Heart right ventricle (tissue), 16 donors: ENCODE measurements at regions of chr1 and their contacts with region 1.

Region 1: GRCh38 chr1:109426278-109427170 is at the start of gene PSMA5:
- DNase-seq: peak; percentile 93 to 97
- ATAC-seq: peak; percentile 99 to 100 (median 99)
- H3K4me3 ChIP-seq: peak within 1 kb of the TSS; percentile 76 to 96 (median 90)
- H3K27ac ChIP-seq: peak within 1 kb of the TSS; percentile 47 to 94 (median 88)
- H3K4me1 ChIP-seq: peaks cover 0 to 47% (median 30%) of the 10 kb centered on the region in 9 donors
- H3K27me3 ChIP-seq: no peaks in the 10 kb centered on the region
- CTCF ChIP-seq: no peak
- total RNA-seq, gene PSMA5: 51.2 to 65.6 (median 59.2) TPM

Region 2: GRCh38 chr1:109161858-109162606 is 264.5 kb before region 1 on chr1:
- intact Hi-C with region 1: no loop called
- DNase-seq: peak in 1 of 2 donors; percentile 34
- ATAC-seq: peak in 7 of 8 donors; percentile 53 to 93 (median 78)
- H3K4me3 ChIP-seq: peak overlapping the region in 1 of 10 donors; percentile 9
- H3K27ac ChIP-seq: peak overlapping the region in 7 of 10 donors; percentile 7 to 73 (median 30)
- H3K4me1 ChIP-seq: peaks cover 0 to 35% (median 8%) of the 10 kb centered on the region in 9 donors
- H3K27me3 ChIP-seq: no peaks in the 10 kb centered on the region
- CTCF ChIP-seq: no peak

Region 3: DNA sequence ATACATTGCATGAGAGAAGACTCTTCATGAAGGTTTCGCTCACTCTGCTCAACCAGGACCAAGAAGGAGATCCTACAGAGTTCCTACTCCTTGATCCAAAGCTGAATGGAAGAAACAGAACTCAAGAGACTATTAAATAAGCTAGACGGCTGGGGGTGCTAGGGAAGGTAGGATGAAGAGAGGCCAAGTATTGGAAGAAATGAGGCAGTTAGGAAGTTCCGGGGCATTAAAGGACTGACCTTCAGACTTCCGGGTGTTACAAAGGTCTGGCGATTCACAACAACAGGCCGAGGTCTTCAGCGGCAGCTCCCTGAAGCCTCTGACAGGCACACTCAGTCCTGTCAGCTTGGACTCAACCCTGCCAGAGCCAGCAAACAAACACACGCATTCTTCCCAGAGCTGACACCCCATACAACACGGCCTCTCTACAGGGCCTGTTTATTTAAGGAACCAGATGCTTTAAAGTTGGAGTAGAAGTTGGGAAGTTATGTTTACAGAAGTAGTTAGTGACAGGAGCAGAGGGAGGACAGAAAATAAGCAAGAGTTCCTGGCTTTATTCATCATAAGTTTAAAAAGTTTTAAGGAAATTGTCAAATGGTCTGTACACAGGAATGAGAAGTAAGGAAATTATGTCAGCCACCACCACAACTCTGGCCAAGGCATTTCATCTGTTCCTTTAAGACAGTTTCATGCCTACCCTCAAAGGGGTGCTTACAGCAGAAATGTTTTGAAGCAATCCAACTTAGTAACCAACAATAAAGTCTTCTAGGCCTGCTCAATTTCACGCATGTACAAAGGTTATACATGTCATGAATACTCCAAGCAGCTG is 33.5 kb before region 1 on chr1:
- intact Hi-C with region 1: no loop called
- DNase-seq: peak; percentile 71 to 76
- ATAC-seq: peak; percentile 44 to 86 (median 70)
- H3K4me3 ChIP-seq: peak overlapping the region in 9 of 10 donors; percentile 1 to 42 (median 34)
- H3K27ac ChIP-seq: peak overlapping the region; percentile 72 to 96 (median 90)
- H3K4me1 ChIP-seq: peaks cover 22 to 89% (median 79%) of the 10 kb centered on the region in 9 donors
- H3K27me3 ChIP-seq: peaks cover 0 to 11% (median 0%) of the 10 kb centered on the region in 7 donors
- CTCF ChIP-seq: no peak

Region 4: GRCh38 chr1:109466452-109467300 is 40.2 kb after region 1 on chr1 and contains the start of gene SYPL2:
- intact Hi-C with region 1: loop called in 3 of 10 experiments (anchors 2 to 5 kb)
- DNase-seq: peak; percentile 69 to 72
- ATAC-seq: peak; percentile 84 to 95 (median 89)
- H3K4me3 ChIP-seq: peak within 1 kb of the TSS; percentile 57 to 72 (median 68)
- H3K27ac ChIP-seq: peak within 1 kb of the TSS; percentile 32 to 96 (median 90)
- H3K4me1 ChIP-seq: peaks cover 0 to 16% (median 10%) of the 10 kb centered on the region in 9 donors
- H3K27me3 ChIP-seq: peaks cover 0 to 99% (median 30%) of the 10 kb centered on the region in 7 donors
- CTCF ChIP-seq: peak in 2 of 9 donors; percentile 10 to 15
- total RNA-seq, gene SYPL2: 25.4 to 47.3 (median 27.7) TPM

Region 5: DNA sequence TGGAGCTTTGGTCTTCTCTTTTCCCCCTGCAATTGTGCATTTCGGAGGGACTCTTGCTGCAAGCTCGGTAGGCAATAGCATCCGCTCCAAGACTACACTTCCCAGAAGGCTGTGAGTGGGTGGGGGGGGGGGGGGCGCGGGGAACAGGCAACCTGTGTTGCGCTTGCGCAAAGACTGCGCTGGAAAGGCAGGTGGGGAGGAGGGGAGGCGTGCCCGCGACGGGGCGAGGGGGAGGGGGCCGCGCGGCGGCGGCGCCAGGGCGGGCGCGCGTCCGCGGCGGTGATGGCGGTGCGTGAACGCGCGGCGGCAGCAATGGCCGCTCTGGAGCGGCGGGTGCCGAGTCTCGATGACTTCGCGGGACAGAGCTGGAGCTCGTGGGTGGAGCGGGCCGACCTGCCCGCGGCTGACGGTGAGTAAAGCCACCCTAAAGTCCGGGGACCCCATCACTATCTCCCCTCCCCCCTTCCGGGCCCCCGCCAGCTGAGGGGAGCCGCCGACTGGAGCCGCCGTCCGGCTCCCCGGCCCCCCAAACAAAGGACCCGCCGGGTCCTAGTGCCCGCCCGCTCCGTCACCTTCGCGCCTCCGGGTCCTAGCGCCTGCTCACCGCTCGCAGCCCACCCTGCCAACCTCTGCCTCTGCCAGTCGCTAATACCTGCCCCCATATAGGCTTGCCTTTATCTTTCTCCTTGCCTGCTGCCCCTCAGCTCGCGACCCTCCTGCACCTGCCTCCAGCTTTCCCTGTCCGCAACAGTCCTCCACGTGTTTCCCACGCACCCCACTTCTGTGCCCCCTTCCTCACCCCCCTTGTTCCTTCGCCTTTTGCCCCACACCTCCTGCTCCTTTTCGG is 57.4 kb after region 1 on chr1 and contains the start of gene ATXN7L2:
- intact Hi-C with region 1: loop called in 2 of 10 experiments (anchors 5 to 10 kb)
- DNase-seq: peak; percentile 91 to 94
- ATAC-seq: peak; percentile 89 to 96 (median 93)
- H3K4me3 ChIP-seq: peak within 1 kb of the TSS; percentile 33 to 90 (median 82)
- H3K27ac ChIP-seq: peak within 1 kb of the TSS; percentile 96 to 99 (median 98)
- H3K4me1 ChIP-seq: peaks cover 8 to 23% (median 18%) of the 10 kb centered on the region in 9 donors
- H3K27me3 ChIP-seq: peaks cover 0 to 9% (median 0%) of the 10 kb centered on the region in 7 donors
- CTCF ChIP-seq: no peak
- total RNA-seq, gene ATXN7L2: 1.8 to 3.0 (median 2.5) TPM